Left cardiac atrium (tissue), 4 donors: ENCODE measurements at regions of chr2 and their contacts with region 1.

Region 1: GRCh38 chr2:118882709-118883210 is 35.3 kb upstream of the EN1 start:
- DNase-seq: peak; percentile 44
- ATAC-seq: peak; percentile 86 to 87

Region 2: GRCh38 chr2:118812552-118812951 is 70.2 kb before region 1 on chr2:
- intact Hi-C with region 1: no loop called
- DNase-seq: no peak
- ATAC-seq: no peak

Region 3: GRCh38 chr2:118940486-118941205 is 57.9 kb after region 1 on chr2:
- intact Hi-C with region 1: no loop called
- DNase-seq: peak; percentile 45
- ATAC-seq: peak; percentile 38 to 56

Region 4: GRCh38 chr2:119283860-119284331 is 401.1 kb after region 1 on chr2:
- intact Hi-C with region 1: loop called in 1 of 2 experiments (anchors 10 kb)
- DNase-seq: peak; percentile 71
- ATAC-seq: peak; percentile 78 to 85

Region 5: GRCh38 chr2:119290859-119291587 is 408.3 kb after region 1 on chr2:
- intact Hi-C with region 1: loop called (anchors 2 to 10 kb)
- DNase-seq: peak; percentile 91
- ATAC-seq: peak; percentile 87 to 90

Region 6: GRCh38 chr2:119301413-119301812 is 418.7 kb after region 1 on chr2:
- intact Hi-C with region 1: no loop called
- DNase-seq: no peak
- ATAC-seq: no peak